H1 (cell line): ENCODE measurements at regions of chr12 and their contacts with region 1.

Region 1: GRCh38 chr12:6688999-6689882 is at the start of gene ZNF384:
- DNase-seq: peak; percentile 89 to 97
- H3K4me3 ChIP-seq: peak within 1 kb of the TSS; percentile 78 to 96 (median 88)
- H3K27ac ChIP-seq: peak within 1 kb of the TSS; percentile 90
- H3K4me1 ChIP-seq: peaks cover 0 to 9% (median 7%) of the 10 kb centered on the region in 4 experiments; a peak in 6 of 7 replicates
- H3K27me3 ChIP-seq: no peaks in the 10 kb centered on the region
- CTCF ChIP-seq: no peak
- EP300 ChIP-seq: peak in 1 of 2 experiments; percentile 62; a peak in 1 of 3 replicates
- POLR2A ChIP-seq: peak in 1 of 2 experiments; percentile 56; a peak in 1 of 3 replicates
- RAD21 ChIP-seq: no peak
- total RNA-seq, gene ZNF384: 59.6 and 60.1 TPM in 2 replicates

Region 2: GRCh38 chr12:6367065-6367968 is 321.9 kb before region 1 on chr12:
- CTCF ChIA-PET with region 1: no interaction called
- POLR2A ChIA-PET with region 1: no interaction called
- DNase-seq: no peak
- H3K4me3 ChIP-seq: no peak overlapping the region
- H3K27ac ChIP-seq: no peak overlapping the region
- H3K4me1 ChIP-seq: peaks cover 10 to 23% (median 14%) of the 10 kb centered on the region in 4 experiments
- H3K27me3 ChIP-seq: no peaks in the 10 kb centered on the region
- CTCF ChIP-seq: 0 out of 4 replicates have a peak, but pooled peaks of 1 of the 3 experiments have one; percentile 3
- EP300 ChIP-seq: no peak
- POLR2A ChIP-seq: no peak
- RAD21 ChIP-seq: peak in 1 of 2 experiments; percentile 9; a peak in 1 of 4 replicates

Region 3: DNA sequence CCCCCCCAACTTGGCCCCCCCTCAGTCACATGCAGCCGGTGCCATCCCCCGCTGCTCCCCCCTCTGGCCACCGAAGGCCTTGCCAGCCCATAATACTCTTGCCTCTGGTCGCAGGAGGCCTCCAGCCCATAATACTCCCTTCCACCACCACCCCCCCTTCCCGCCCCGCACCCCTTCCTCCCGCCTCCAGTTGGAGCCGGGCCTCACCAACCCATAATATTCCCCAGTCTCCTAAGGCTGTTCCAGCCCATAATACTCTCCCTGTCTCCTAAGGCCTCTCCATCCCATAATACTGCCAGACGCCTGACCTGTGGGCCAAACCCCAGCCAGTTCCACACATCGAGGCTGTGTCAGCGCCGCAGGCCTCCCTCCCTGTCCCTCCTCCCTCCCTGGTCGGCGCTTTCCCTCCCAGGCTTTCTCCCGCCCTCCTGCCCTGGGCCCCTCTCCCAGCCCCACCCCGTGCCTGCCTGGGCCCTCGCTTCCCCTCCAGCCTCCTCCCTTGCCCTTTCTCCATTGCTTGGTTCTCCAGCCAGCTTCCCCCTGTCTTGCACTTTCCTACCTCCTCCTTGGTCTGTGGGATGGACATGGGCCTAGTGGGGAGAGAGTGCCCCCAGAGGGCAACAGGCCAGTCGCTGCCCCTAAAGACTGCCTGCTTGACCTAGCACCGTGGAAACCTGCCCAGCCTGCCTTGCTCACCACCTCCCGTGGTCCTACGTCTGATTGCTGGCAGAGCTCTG is 75.3 kb before region 1 on chr12:
- CTCF ChIA-PET with region 1: interaction called, 21 read pairs
- POLR2A ChIA-PET with region 1: interaction called, 19 read pairs
- DNase-seq: peak; percentile 82 to 86
- H3K4me3 ChIP-seq: peak overlapping the region in 2 of 4 experiments; percentile 0 to 32; a peak in 1 of 8 replicates
- H3K27ac ChIP-seq: peak overlapping the region; percentile 44; the same call in 1 of the 2 replicates
- H3K4me1 ChIP-seq: peaks cover 15 to 21% (median 17%) of the 10 kb centered on the region in 4 experiments
- H3K27me3 ChIP-seq: peaks cover 0 to 3% (median 1%) of the 10 kb centered on the region in 4 experiments; a peak in 2 of 7 replicates
- CTCF ChIP-seq: peak; percentile 27 to 63 (median 34); a peak in 3 of 4 replicates
- EP300 ChIP-seq: no peak
- POLR2A ChIP-seq: no peak
- RAD21 ChIP-seq: peak in 1 of 2 experiments; percentile 10; a peak in 1 of 4 replicates

Region 4: DNA sequence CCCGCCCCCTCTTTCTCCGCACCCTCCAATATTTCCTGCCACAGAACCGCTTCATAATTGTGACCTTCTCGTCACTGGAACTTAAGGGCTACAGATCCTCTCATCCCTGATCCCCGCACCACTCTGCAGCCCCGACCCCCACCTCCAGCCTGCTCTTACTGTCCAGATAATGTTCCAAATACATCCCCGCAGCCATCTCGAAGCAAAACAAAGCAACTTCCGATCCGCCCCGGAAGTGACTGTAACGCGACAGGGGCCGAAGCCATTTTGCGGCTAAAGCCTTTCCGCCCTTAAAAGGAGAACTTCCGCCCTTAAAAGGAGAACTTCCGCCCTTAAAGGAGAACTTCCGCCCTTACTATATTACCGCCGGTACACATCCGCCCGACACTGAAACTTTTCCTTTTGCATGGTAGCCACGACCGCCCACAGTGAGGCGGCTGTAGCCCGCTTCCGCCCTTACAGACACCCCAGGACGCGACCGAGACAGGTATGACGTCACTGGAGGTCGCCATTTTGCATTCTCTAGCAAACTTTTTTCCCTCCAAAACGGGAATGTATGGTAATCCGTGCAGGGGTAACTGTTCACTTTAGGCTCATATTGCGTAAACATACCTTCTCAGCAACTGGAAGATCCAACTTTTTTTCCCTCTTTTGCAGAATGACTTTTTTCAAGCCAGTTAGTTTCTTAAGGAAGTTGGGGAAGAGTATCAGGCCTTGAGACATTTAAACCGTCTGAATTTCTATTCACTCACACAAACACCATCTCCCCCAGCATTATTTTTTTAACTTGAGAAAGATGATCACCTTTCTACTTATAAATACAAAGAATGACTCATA is 26.1 kb before region 1 on chr12 and contains the start of gene ING4:
- CTCF ChIA-PET with region 1: interaction called, 125 read pairs
- POLR2A ChIA-PET with region 1: interaction called, 72 read pairs
- DNase-seq: peak; percentile 88 to 95
- H3K4me3 ChIP-seq: peak within 1 kb of the TSS; percentile 72 to 90 (median 82)
- H3K27ac ChIP-seq: peak within 1 kb of the TSS; percentile 80
- H3K4me1 ChIP-seq: peaks cover 0 to 4% (median 0%) of the 10 kb centered on the region in 4 experiments; a peak in 1 of 7 replicates
- H3K27me3 ChIP-seq: no peaks in the 10 kb centered on the region
- CTCF ChIP-seq: no peak
- EP300 ChIP-seq: no peak
- POLR2A ChIP-seq: peak in 1 of 2 experiments; percentile 73; a peak in 2 of 3 replicates
- RAD21 ChIP-seq: no peak
- total RNA-seq, gene ING4: 21.7 and 22.9 TPM in 2 replicates

Region 5: DNA sequence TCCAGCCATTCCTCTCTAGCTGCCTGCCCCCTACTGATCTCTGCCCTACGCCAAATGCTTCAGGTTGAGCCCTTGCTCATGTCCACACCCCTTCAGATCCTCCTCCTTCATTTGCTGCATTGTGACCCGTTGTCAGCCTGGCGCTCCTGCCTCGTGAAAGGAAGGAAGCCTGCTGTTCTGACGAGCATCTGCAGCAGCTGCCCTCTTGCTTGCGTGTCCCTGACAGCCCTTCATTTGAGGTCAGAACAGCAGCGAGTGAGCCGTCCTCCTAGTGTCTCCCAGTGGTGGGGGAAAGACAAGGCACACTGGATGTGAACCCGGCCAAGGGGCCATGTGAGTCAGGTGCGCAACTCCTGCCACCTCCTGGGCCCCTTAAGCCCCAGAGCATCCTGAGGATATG is 14.4 kb after region 1 on chr12:
- CTCF ChIA-PET with region 1: interaction called, 39 read pairs
- POLR2A ChIA-PET with region 1: interaction called, 32 read pairs
- DNase-seq: peak in 1 of 2 experiments; percentile 65
- H3K4me3 ChIP-seq: peak overlapping the region in 2 of 4 experiments; percentile 1 to 13; a peak in 2 of 8 replicates
- H3K27ac ChIP-seq: no peak overlapping the region
- H3K4me1 ChIP-seq: peaks cover 0 to 11% (median 8%) of the 10 kb centered on the region in 4 experiments; a peak in 5 of 7 replicates
- H3K27me3 ChIP-seq: peaks cover 0 to 16% (median 14%) of the 10 kb centered on the region in 4 experiments; a peak in 6 of 7 replicates
- CTCF ChIP-seq: peak in 1 of 3 experiments; percentile 28; a peak in 1 of 4 replicates
- EP300 ChIP-seq: no peak
- POLR2A ChIP-seq: no peak
- RAD21 ChIP-seq: peak in 1 of 2 experiments; percentile 10; a peak in 1 of 4 replicates

Region 6: GRCh38 chr12:6723607-6724396 is 34.6 kb after region 1 on chr12 and contains the start of gene COPS7A:
- CTCF ChIA-PET with region 1: interaction called, 6 read pairs
- POLR2A ChIA-PET with region 1: interaction called, 13 read pairs
- DNase-seq: peak; percentile 95 to 98
- H3K4me3 ChIP-seq: peak within 1 kb of the TSS; percentile 58 to 91 (median 78)
- H3K27ac ChIP-seq: no peak within 1 kb of the TSS; the same call in 1 of the 2 replicates
- H3K4me1 ChIP-seq: peaks cover 0 to 2% (median under 1%) of the 10 kb centered on the region in 4 experiments; a peak in 3 of 7 replicates
- H3K27me3 ChIP-seq: no peaks in the 10 kb centered on the region; a peak in 2 of 7 replicates
- CTCF ChIP-seq: peak in 1 of 3 experiments; percentile 24; a peak in 1 of 4 replicates
- EP300 ChIP-seq: peak; percentile 21 to 63; a peak in 1 of 3 replicates
- POLR2A ChIP-seq: peak in 1 of 2 experiments; percentile 54; a peak in 2 of 3 replicates
- RAD21 ChIP-seq: 0 out of 4 replicates have a peak, but pooled peaks of 1 of the 2 experiments have one; percentile 2
- total RNA-seq, gene COPS7A: 43.3 and 44.5 TPM in 2 replicates